ENCODE measurements at regions of chr7 and their contacts with region 1.

Region 1: GRCh38 chr7:1137510-1138167 is 22.4 kb downstream of the ZFAND2A start:
- H3K4me3 Mint-ChIP-seq: peak overlapping the region; percentile 88
- H3K27ac Mint-ChIP-seq: peak overlapping the region; percentile 89
- H3K4me1 Mint-ChIP-seq: peaks cover 24% of the 10 kb centered on the region
- H3K27me3 Mint-ChIP-seq: no peaks in the 10 kb centered on the region

Region 2: GRCh38 chr7:901381-902154 is 236.1 kb before region 1 on chr7:
- intact Hi-C with region 1: loop called (anchors 5 kb)
- H3K4me3 Mint-ChIP-seq: no peak overlapping the region
- H3K27ac Mint-ChIP-seq: peak overlapping the region; percentile 50
- H3K4me1 Mint-ChIP-seq: peaks cover 57% of the 10 kb centered on the region
- H3K27me3 Mint-ChIP-seq: no peaks in the 10 kb centered on the region

Region 3: DNA sequence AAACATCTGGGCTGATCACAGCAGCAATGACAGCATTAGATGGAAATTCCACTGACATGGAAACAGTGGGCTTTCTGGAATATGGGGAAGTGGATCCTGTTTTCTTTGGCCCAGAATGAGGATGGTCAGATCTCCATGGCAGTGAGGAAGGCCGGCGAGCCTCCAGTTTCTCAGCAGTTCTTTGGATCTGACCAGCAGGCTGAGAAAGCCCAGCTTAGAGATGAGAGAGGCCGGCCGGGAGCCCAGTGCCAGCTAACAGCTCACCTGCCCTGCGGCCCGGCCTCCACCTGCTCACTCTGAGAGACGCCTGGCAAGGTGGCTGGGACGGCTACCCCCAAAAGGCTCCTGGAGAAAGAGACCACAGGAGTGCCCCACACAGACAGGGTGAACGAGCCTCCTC is 25.5 kb before region 1 on chr7:
- intact Hi-C with region 1: no loop called
- H3K4me3 Mint-ChIP-seq: no peak overlapping the region
- H3K27ac Mint-ChIP-seq: no peak overlapping the region
- H3K4me1 Mint-ChIP-seq: no peaks in the 10 kb centered on the region
- H3K27me3 Mint-ChIP-seq: peaks cover 3% of the 10 kb centered on the region

Region 4: DNA sequence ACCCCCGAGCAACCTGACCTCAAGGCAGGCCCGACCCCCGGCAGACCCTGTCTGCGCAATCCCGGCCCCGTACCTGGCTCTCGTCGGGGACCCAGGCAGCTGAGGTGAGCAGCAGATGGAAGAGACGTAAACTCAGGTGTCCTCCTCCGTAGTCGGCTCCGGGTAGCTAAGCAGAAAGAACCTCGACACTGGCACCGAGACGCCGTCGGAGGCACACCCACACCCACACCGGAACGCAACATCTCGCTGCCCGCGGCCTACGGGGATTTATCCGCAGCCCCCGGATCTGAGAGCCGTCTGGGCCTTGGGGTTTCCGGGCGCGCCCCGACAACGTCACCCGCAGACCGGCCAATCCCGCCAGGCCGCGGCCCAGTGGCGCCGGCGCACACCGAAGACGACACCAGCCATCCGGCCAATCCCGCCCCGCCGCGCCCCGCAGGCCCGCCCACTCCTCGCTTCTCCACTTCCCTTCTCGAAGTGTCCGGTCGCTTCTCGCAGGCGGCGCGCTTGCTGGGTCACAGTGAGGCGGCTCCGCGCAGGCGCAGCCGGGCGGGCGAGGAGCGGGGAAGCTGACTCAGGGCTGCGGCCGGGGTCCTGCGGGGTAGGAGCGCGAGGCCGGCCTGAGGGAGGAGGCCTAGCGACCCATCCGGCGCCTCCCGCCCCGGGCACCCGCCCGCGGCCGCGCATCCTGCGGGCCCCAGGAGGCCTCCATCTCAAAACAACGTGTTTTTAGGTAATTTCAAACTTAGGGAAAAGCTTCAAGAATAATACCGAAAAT is 22.4 kb after region 1 on chr7 and contains the start of gene ZFAND2A:
- intact Hi-C with region 1: loop called (anchors 1 kb)
- H3K4me3 Mint-ChIP-seq: peak within 1 kb of the TSS; percentile 83
- H3K27ac Mint-ChIP-seq: peak within 1 kb of the TSS; percentile 96
- H3K4me1 Mint-ChIP-seq: peaks cover 33% of the 10 kb centered on the region
- H3K27me3 Mint-ChIP-seq: no peaks in the 10 kb centered on the region

Region 5: DNA sequence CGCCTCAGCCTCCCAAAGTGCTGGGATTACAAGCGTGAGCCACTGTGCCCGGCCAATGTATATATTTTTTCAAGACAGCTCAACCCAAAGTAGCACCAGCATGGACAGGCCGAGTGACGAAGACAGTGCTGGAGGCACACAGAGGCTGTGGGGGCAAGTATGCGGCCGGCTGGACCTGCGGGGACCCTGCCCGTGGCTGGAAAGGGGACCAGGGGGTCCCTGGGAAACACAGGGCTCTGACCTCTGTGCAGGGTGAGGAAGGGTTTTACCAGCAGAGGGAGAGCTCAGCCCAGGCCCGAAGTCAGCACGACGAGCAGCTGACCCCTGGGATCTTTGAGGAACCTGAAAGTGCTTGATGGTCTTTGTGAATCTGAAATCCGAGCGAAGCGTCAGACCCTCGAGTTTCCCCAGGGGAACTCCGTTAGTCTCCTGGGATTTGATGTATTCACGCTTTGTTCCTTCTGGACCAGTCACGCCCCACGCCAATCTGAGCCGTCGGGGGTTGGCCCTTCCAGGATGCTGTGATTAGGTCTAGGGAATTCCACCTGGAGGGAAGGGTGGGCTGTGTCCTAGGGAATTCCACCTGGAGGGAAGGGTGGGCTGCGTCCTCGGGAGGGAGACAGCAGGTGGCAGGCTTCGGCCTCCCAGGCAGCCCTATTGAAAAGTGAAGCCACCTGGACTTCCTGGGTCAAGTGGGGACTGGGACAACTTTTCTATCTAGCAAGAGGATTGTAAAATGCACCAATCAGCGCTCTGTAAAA is 33.3 kb after region 1 on chr7:
- intact Hi-C with region 1: no loop called
- H3K4me3 Mint-ChIP-seq: no peak overlapping the region
- H3K27ac Mint-ChIP-seq: no peak overlapping the region
- H3K4me1 Mint-ChIP-seq: peaks cover 13% of the 10 kb centered on the region
- H3K27me3 Mint-ChIP-seq: no peaks in the 10 kb centered on the region

Region 6: DNA sequence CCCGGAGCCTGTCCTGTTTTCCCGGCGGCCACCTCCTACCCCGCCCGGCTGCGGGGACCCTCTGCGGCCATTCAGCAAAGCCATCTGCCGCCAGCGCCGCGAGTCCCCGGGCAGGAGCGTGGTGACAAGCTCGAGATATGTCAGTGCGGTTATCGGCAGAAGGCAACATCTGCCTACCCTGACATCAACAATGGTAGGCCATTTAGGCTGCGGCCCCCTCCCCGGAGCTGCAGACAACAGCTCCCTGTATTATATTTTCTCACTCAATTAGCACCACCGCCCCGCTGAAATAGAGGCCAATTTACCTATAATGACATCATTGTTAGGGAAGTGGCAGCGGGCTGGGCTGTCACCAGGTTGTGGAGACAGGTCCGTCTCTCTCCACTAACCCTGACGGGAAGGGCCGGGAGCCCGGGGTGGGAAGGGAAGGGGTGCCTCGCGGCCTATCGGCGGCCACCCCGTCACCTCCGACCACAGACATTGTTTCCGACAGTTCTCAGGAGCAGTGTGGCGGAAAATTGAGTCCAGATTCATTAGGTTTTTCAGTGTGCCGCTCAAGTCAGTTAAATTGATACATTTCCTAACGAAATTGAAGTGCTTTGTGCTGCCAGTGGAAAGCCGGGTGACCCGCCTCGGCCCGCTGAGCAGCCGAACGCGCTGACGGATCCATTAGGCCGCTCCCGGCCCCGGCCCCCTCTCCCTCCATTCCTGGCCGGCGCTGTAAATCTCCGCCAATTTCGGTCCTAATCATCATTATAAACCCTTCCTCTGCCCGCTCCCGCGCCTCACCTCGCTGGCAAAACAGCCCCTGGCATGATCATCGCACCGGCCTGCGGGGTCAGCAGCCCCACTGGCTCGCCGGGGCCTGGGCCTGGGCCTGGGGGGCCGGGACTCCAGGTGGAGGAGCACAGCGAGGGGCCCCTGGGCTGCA is 138.1 kb after region 1 on chr7:
- intact Hi-C with region 1: no loop called
- H3K4me3 Mint-ChIP-seq: no peak overlapping the region
- H3K27ac Mint-ChIP-seq: no peak overlapping the region
- H3K4me1 Mint-ChIP-seq: no peaks in the 10 kb centered on the region
- H3K27me3 Mint-ChIP-seq: peaks cover 10% of the 10 kb centered on the region

Measured in dendritic cell treated with granulocyte-macrophage colony-stimulating factor and Interleukin-4, amounts not matched to agents 40 ng/mL and 50 ng/mL, for 4 days (primary cell).